MCF 10A (cell line): ENCODE measurements at regions of chr1 and their contacts with region 1.

Region 1: DNA sequence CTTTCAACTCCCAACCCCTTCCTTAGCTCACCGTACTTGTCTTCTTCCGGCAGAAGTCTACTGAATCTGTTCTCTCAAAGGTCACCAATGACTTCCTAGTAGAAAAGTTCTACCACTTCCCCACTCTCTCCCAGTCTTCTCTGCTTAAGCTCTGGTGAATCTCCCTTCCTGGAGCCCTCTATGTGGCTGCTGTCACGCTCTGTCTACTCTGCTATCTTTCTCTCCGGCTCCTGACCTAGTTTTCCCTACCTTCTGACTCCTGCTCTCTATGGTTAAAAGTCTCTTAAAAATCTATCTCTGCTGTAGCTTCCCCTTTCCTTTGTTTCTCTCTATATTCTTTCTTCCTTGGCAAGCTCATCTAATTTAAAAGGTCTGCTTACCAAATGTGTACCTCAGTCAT is 350.1 kb upstream of the GREM2 start:
- DNase-seq: no peak
- H3K4me3 Mint-ChIP-seq: no peak overlapping the region
- H3K27ac Mint-ChIP-seq: no peak overlapping the region
- H3K4me1 Mint-ChIP-seq: no peaks in the 10 kb centered on the region
- H3K27me3 Mint-ChIP-seq: no peaks in the 10 kb centered on the region
- CTCF ChIP-seq: no peak

Region 2: DNA sequence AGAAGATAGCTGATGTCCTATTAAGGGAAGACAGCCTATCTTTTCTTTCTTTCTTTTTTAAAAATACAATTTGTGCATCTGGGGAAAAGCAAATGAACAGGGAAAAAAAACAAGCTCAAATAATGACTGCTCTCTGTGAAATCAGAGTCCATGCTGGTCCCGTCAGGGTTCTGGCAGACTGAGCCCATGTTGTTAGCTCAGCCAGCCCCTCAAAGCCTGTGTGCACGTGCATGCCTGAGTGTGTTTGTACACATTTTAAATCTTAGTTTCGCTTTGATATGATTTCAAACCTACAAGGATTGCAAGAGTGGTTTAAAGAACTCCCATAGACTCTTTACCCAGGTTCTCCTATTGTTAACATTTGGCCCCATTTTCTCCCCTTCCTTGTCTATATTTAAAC is 118.3 kb before region 1 on chr1:
- CTCF ChIA-PET with region 1: no interaction called
- POLR2A ChIA-PET with region 1: no interaction called
- intact Hi-C with region 1: no loop called
- DNase-seq: no peak
- H3K4me3 Mint-ChIP-seq: no peak overlapping the region
- H3K27ac Mint-ChIP-seq: no peak overlapping the region
- H3K4me1 Mint-ChIP-seq: peaks cover 7% of the 10 kb centered on the region
- H3K27me3 Mint-ChIP-seq: no peaks in the 10 kb centered on the region
- CTCF ChIP-seq: no peak

Region 3: GRCh38 chr1:240946926-240947325 is 15.2 kb before region 1 on chr1:
- CTCF ChIA-PET with region 1: interaction called, 19 read pairs
- POLR2A ChIA-PET with region 1: no interaction called
- intact Hi-C with region 1: no loop called
- DNase-seq: peak; percentile 85
- H3K4me3 Mint-ChIP-seq: no peak overlapping the region
- H3K27ac Mint-ChIP-seq: no peak overlapping the region
- H3K4me1 Mint-ChIP-seq: no peaks in the 10 kb centered on the region
- H3K27me3 Mint-ChIP-seq: no peaks in the 10 kb centered on the region
- CTCF ChIP-seq: peak; percentile 81

Region 4: GRCh38 chr1:241157435-241157834 is 195.3 kb after region 1 on chr1:
- CTCF ChIA-PET with region 1: no interaction called
- POLR2A ChIA-PET with region 1: no interaction called
- intact Hi-C with region 1: no loop called
- DNase-seq: no peak
- H3K4me3 Mint-ChIP-seq: no peak overlapping the region
- H3K27ac Mint-ChIP-seq: no peak overlapping the region
- H3K4me1 Mint-ChIP-seq: peaks cover 14% of the 10 kb centered on the region
- H3K27me3 Mint-ChIP-seq: no peaks in the 10 kb centered on the region
- CTCF ChIP-seq: no peak